ENCODE measurements at regions of chr2 and their contacts with region 1.

Region 1: DNA sequence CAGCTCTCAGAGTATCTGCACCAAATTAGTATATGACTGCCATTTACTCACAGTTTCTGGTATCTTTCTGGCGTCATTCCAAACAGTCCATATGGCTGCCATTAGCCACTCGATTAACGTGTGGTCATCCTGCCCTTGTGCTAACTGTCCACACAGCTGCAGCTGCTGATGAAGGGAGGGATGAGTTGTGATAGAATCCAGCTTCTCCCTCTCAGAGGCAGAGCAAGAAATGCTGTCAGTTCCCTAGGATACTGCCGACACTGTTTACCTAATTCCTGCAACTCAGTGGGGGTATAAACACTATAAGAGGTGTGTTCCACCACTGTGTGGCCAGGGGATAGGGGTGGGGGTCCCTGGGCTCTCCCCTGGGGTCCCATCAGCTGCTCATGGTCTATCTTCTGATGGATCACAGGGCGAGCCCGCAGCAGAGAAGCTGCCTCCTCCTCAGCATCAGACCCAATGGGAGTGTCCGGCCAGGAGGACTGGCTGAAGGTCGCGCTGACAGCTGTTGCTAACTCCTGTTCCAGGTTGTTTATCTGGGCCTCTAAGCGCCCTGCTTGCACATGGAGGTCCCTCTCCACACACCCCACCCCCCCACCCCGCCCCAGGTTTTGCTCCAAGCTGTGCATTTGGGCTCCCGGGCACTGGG is 17.3 kb upstream of the KLHL23 start:
- DNase-seq: peak; percentile 48 to 84 (median 64)
- ATAC-seq: peak; percentile 67
- H3K4me3 ChIP-seq: peak overlapping the region; percentile 29; the same call in 1 of the 2 replicates
- H3K27ac ChIP-seq: no peak overlapping the region
- H3K4me1 ChIP-seq: peaks cover 23 to 48% of the 10 kb centered on the region in 2 experiments
- H3K27me3 ChIP-seq: no peaks in the 10 kb centered on the region
- CTCF ChIP-seq: no peak
- EP300 ChIP-seq: peak; percentile 30; the same call in 1 of the 2 replicates
- POLR2A ChIP-seq: no peak
- RAD21 ChIP-seq: no peak

Region 2: GRCh38 chr2:169705927-169706326 is 10.4 kb before region 1 on chr2:
- CTCF ChIA-PET with region 1: no interaction called
- POLR2A ChIA-PET with region 1: interaction called, 60 read pairs
- in situ Hi-C with region 1: no loop called
- intact Hi-C with region 1: no loop called
- DNase-seq: no peak
- ATAC-seq: no peak
- H3K4me3 ChIP-seq: no peak overlapping the region
- H3K27ac ChIP-seq: no peak overlapping the region
- H3K4me1 ChIP-seq: no peaks in the 10 kb centered on the region
- H3K27me3 ChIP-seq: no peaks in the 10 kb centered on the region
- CTCF ChIP-seq: no peak
- EP300 ChIP-seq: no peak
- POLR2A ChIP-seq: no peak
- RAD21 ChIP-seq: no peak

Region 3: DNA sequence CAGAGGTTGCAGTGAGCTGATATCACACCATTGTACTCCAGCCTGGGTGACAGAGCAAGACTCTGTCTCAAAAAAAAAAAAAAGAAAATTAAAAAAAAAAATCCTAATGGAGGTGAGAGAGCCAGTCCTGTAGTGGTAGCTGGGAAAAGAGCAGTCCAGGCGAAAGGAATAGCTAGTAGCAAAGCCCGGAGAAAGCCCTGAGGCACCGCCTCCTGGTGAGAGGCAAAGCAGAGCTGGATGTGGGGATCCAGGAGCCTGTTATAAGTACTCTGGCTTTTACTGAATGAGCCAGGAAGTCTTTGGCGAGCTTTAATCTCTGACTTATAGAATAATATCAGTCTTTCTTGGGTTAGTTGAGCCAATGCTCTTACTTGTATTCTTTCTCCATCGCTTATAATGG is 10.7 kb after region 1 on chr2:
- CTCF ChIA-PET with region 1: no interaction called
- POLR2A ChIA-PET with region 1: interaction called, 37 read pairs
- in situ Hi-C with region 1: no loop called
- intact Hi-C with region 1: no loop called
- DNase-seq: no peak
- ATAC-seq: peak; percentile 44
- H3K4me3 ChIP-seq: no peak overlapping the region
- H3K27ac ChIP-seq: no peak overlapping the region
- H3K4me1 ChIP-seq: peaks cover 0 to 4% of the 10 kb centered on the region in 2 experiments; a peak in 2 of 5 replicates
- H3K27me3 ChIP-seq: no peaks in the 10 kb centered on the region
- CTCF ChIP-seq: no peak
- EP300 ChIP-seq: no peak
- POLR2A ChIP-seq: no peak
- RAD21 ChIP-seq: no peak

Region 4: GRCh38 chr2:169734169-169734847 is 17.9 kb after region 1 on chr2:
- CTCF ChIA-PET with region 1: no interaction called
- POLR2A ChIA-PET with region 1: interaction called, 37 read pairs
- in situ Hi-C with region 1: no loop called
- intact Hi-C with region 1: no loop called
- DNase-seq: peak; percentile 58 to 74 (median 70)
- ATAC-seq: peak; percentile 39
- H3K4me3 ChIP-seq: peak overlapping the region; percentile 64
- H3K27ac ChIP-seq: peak overlapping the region; percentile 69
- H3K4me1 ChIP-seq: peaks cover 22 to 27% of the 10 kb centered on the region in 2 experiments
- H3K27me3 ChIP-seq: no peaks in the 10 kb centered on the region
- CTCF ChIP-seq: no peak
- EP300 ChIP-seq: no peak
- POLR2A ChIP-seq: no peak
- RAD21 ChIP-seq: no peak